SK-MEL-5 (cell line): ENCODE measurements at regions of chr12 and their contacts with region 1.

Region 1: GRCh38 chr12:108234158-108234557 is 105.0 kb downstream of the CMKLR1 start:
- DNase-seq: peak; percentile 35

Region 2: GRCh38 chr12:108198043-108198442 is 36.1 kb before region 1 on chr12:
- in situ Hi-C with region 1: loop called (anchors 5 kb)
- DNase-seq: no peak